ENCODE measurements at regions of chr4 and their contacts with region 1.

Region 1: GRCh38 chr4:89878611-89879010 is 16.0 kb upstream of the MMRN1 start:
- DNase-seq: no peak
- H3K4me3 ChIP-seq: no peak overlapping the region
- H3K27ac ChIP-seq: no peak overlapping the region
- H3K27me3 ChIP-seq: no peaks in the 10 kb centered on the region
- CTCF ChIP-seq: no peak

Region 2: DNA sequence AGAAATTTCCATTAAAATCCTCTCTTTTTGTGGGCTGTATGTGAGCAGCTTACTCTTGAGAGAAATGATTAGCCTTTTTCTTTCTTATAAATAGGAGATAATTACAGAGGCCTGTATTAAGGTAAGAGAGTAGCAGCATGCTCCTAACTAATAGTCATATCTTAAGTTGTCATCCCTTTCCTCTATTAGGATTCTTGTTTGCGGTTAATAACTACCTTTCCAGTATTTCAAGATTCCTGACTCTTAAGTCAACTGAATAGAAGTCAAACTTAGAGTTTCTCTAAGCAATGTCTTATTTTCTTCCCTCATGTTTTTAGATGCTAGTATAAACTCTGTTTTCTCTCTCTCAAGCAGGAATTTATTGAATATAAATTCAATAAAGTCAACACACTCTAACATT is 431.1 kb before region 1 on chr4:
- intact Hi-C with region 1: no loop called
- DNase-seq: no peak
- H3K4me3 ChIP-seq: no peak overlapping the region
- H3K27ac ChIP-seq: no peak overlapping the region
- H3K27me3 ChIP-seq: no peaks in the 10 kb centered on the region
- CTCF ChIP-seq: no peak

Region 3: GRCh38 chr4:89586864-89587263 is 291.7 kb before region 1 on chr4:
- intact Hi-C with region 1: loop called in 1 of 2 experiments (anchors 10 kb)
- DNase-seq: no peak
- H3K4me3 ChIP-seq: no peak overlapping the region
- H3K27ac ChIP-seq: no peak overlapping the region
- H3K27me3 ChIP-seq: peaks cover 0 to 3% (median 0%) of the 10 kb centered on the region in 45 donors
- CTCF ChIP-seq: peak in 45 of 56 donors; percentile 9 to 59 (median 39)

Measured in dorsolateral prefrontal cortex (tissue), 120 donors.